ENCODE measurements at regions of chr3 and their contacts with region 1.

Region 1: DNA sequence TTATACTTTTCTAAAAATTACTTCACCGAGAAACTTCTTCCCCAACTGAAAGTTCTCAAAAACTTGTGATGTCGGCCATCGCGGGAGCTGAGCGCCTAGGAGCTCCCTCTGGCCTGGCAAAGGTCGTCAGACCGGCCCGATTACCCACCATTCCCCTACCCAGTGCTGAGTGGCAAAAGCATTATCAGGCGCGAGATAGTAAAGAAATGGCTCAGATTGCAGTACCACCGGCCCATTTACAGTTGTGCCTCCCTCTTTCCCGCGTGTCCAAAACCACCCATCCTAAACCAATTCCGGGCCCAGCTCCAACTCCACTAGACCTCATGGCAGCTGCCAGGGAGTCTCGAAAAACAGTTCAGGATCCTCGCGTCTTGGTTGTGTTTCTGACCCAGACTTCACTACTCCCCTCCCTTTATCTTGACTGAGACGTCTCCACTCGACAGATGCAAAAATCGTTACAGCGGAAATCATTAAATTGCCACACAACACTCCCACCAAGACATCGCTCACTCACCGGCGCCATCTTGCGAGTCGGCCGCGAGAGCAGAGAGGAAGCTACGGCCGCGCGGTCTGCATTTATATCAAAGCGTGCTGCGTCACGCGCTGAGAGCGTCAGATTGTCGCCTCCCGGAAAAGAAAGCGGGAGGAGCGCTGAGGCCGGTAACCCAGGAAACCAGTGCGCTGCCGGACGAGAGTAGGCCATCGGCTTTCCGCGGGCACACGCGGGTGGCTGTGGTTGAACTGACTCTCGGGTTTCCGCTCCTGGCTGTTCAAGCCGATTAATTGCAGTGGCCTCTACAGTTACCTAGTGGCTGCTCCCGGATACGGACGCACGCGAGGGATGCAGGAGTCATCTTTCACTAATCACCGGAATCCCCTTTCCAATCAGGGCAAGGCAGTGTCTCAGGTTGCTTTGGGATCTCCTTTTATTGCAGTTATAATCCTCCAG is at the start of gene RPL22L1:
- DNase-seq: peak; percentile 98
- H3K4me3 ChIP-seq: peak within 1 kb of the TSS; percentile 56 to 72 (median 70)
- H3K27ac ChIP-seq: peak within 1 kb of the TSS; percentile 79 to 85 (median 80)
- H3K4me1 ChIP-seq: peaks cover 17 to 33% (median 31%) of the 10 kb centered on the region in 4 donors
- H3K27me3 ChIP-seq: no peaks in the 10 kb centered on the region
- CTCF ChIP-seq: peak in 1 of 3 experiments; percentile 13
- EP300 ChIP-seq: no peak
- POLR2A ChIP-seq: peak; percentile 80
- total RNA-seq, gene RPL22L1: 17.2 to 57.0 (median 37.1) TPM

Region 2: GRCh38 chr3:170908235-170909116 is 38.6 kb after region 1 on chr3 and contains the start of gene EIF5A2:
- intact Hi-C with region 1: loop called (anchors 5 kb)
- DNase-seq: peak; percentile 99
- H3K4me3 ChIP-seq: peak within 1 kb of the TSS; percentile 72 to 79 (median 77)
- H3K27ac ChIP-seq: peak within 1 kb of the TSS; percentile 74 to 82 (median 79)
- H3K4me1 ChIP-seq: peaks cover 6 to 22% (median 18%) of the 10 kb centered on the region in 4 donors
- H3K27me3 ChIP-seq: peaks cover 0 to 5% (median 0%) of the 10 kb centered on the region in 4 donors
- CTCF ChIP-seq: no peak
- EP300 ChIP-seq: no peak
- POLR2A ChIP-seq: no peak
- total RNA-seq, gene EIF5A2: 7.8 to 10.4 (median 7.9) TPM

Region 3: GRCh38 chr3:171095063-171095462 is 225.1 kb after region 1 on chr3:
- intact Hi-C with region 1: no loop called
- DNase-seq: no peak
- H3K4me3 ChIP-seq: no peak overlapping the region
- H3K27ac ChIP-seq: no peak overlapping the region
- H3K4me1 ChIP-seq: peaks cover 12 to 24% (median 21%) of the 10 kb centered on the region in 4 donors
- H3K27me3 ChIP-seq: no peaks in the 10 kb centered on the region
- CTCF ChIP-seq: no peak
- EP300 ChIP-seq: no peak
- POLR2A ChIP-seq: no peak